Caco-2 (cell line): ENCODE measurements at regions of chr4 and their contacts with region 1.

Region 1: GRCh38 chr4:26410385-26411293 is 79.6 kb downstream of the CCKAR start:
- DNase-seq: peak in 1 of 2 experiments; percentile 51
- H3K4me3 ChIP-seq: no peak overlapping the region
- H3K4me3 Mint-ChIP-seq: no peak overlapping the region
- H3K27ac Mint-ChIP-seq: no peak overlapping the region
- H3K4me1 ChIP-seq: peaks cover 6% of the 10 kb centered on the region
- H3K4me1 Mint-ChIP-seq: no peaks in the 10 kb centered on the region
- H3K27me3 ChIP-seq: no peaks in the 10 kb centered on the region
- H3K27me3 Mint-ChIP-seq: no peaks in the 10 kb centered on the region
- CTCF ChIP-seq: peak; percentile 42 to 64

Region 2: DNA sequence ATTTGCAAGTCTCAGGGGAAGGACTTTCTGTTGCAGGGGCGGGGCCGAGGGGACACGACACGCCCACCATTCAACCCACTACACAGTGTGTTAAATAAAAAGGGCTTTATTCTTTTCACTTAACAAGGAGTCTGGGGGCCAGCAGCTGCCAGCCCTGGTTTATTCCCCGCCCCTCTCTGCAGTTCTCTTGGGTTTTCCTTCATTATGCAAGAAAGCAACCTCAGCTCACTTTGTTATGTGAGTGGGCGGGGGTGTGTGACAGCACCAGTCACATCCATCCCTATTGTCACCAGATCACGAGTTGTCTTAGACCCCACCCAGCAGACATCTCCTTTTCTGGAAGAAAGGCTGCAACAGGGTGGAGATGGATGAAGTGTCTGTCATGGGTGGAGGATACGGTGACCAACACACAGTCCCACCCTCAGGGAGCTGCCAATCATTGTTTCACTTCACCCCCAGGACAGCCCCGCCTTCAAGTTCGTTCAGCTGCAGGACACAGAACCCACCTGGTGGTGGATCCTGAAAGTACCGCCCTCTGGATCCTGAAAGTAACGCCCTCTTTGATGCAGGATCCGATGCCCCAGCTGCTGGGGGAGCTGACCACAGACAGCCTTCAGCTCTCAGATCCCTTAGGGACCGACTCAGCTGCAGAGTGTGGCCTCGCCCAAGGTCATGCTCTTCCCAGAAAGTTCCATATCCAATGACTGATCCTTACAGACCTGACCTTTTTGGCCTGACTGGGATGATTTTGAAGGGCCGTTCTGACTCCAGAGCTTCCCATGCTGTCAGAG is 417.0 kb before region 1 on chr4:
- CTCF ChIA-PET with region 1: no interaction called
- POLR2A ChIA-PET with region 1: no interaction called
- intact Hi-C with region 1: loop called (anchors 1 kb)
- DNase-seq: peak in 1 of 2 experiments; percentile 42
- H3K4me3 ChIP-seq: no peak overlapping the region
- H3K4me3 Mint-ChIP-seq: no peak overlapping the region
- H3K27ac Mint-ChIP-seq: no peak overlapping the region
- H3K4me1 ChIP-seq: no peaks in the 10 kb centered on the region
- H3K4me1 Mint-ChIP-seq: no peaks in the 10 kb centered on the region
- H3K27me3 ChIP-seq: no peaks in the 10 kb centered on the region
- H3K27me3 Mint-ChIP-seq: no peaks in the 10 kb centered on the region
- CTCF ChIP-seq: peak in 1 of 2 experiments; percentile 43

Region 3: GRCh38 chr4:26022346-26023202 is 388.1 kb before region 1 on chr4:
- CTCF ChIA-PET with region 1: no interaction called
- POLR2A ChIA-PET with region 1: no interaction called
- intact Hi-C with region 1: loop called (anchors 2 kb)
- DNase-seq: peak in 1 of 2 experiments; percentile 48
- H3K4me3 ChIP-seq: no peak overlapping the region
- H3K4me3 Mint-ChIP-seq: peak overlapping the region; percentile 29
- H3K27ac Mint-ChIP-seq: peak overlapping the region; percentile 27
- H3K4me1 ChIP-seq: peaks cover 22% of the 10 kb centered on the region
- H3K4me1 Mint-ChIP-seq: peaks cover 43% of the 10 kb centered on the region
- H3K27me3 ChIP-seq: no peaks in the 10 kb centered on the region
- H3K27me3 Mint-ChIP-seq: no peaks in the 10 kb centered on the region
- CTCF ChIP-seq: no peak

Region 4: GRCh38 chr4:26081795-26082498 is 328.7 kb before region 1 on chr4:
- CTCF ChIA-PET with region 1: interaction called, 3 read pairs
- POLR2A ChIA-PET with region 1: no interaction called
- intact Hi-C with region 1: loop called (anchors 5 kb)
- DNase-seq: peak in 1 of 2 experiments; percentile 41
- H3K4me3 ChIP-seq: no peak overlapping the region
- H3K4me3 Mint-ChIP-seq: no peak overlapping the region
- H3K27ac Mint-ChIP-seq: no peak overlapping the region
- H3K4me1 ChIP-seq: no peaks in the 10 kb centered on the region
- H3K4me1 Mint-ChIP-seq: no peaks in the 10 kb centered on the region
- H3K27me3 ChIP-seq: no peaks in the 10 kb centered on the region
- H3K27me3 Mint-ChIP-seq: no peaks in the 10 kb centered on the region
- CTCF ChIP-seq: peak; percentile 63 to 75

Region 5: GRCh38 chr4:26330186-26330787 is 80.4 kb before region 1 on chr4:
- CTCF ChIA-PET with region 1: interaction called, 14 read pairs
- POLR2A ChIA-PET with region 1: no interaction called
- intact Hi-C with region 1: loop called (anchors 1 kb)
- DNase-seq: peak in 1 of 2 experiments; percentile 47
- H3K4me3 ChIP-seq: no peak overlapping the region
- H3K4me3 Mint-ChIP-seq: no peak overlapping the region
- H3K27ac Mint-ChIP-seq: no peak overlapping the region
- H3K4me1 ChIP-seq: no peaks in the 10 kb centered on the region
- H3K4me1 Mint-ChIP-seq: peaks cover 1% of the 10 kb centered on the region
- H3K27me3 ChIP-seq: no peaks in the 10 kb centered on the region
- H3K27me3 Mint-ChIP-seq: no peaks in the 10 kb centered on the region
- CTCF ChIP-seq: peak; percentile 60

Region 6: GRCh38 chr4:26557164-26557563 is 146.5 kb after region 1 on chr4:
- CTCF ChIA-PET with region 1: no interaction called
- POLR2A ChIA-PET with region 1: no interaction called
- intact Hi-C with region 1: no loop called
- DNase-seq: no peak
- H3K4me3 ChIP-seq: no peak overlapping the region
- H3K4me3 Mint-ChIP-seq: no peak overlapping the region
- H3K27ac Mint-ChIP-seq: no peak overlapping the region
- H3K4me1 ChIP-seq: no peaks in the 10 kb centered on the region
- H3K4me1 Mint-ChIP-seq: no peaks in the 10 kb centered on the region
- H3K27me3 ChIP-seq: no peaks in the 10 kb centered on the region
- H3K27me3 Mint-ChIP-seq: peaks cover 3% of the 10 kb centered on the region
- CTCF ChIP-seq: no peak